Mammary epithelial cell (primary cell): ENCODE measurements at regions of chr3 and their contacts with region 1.

Region 1: DNA sequence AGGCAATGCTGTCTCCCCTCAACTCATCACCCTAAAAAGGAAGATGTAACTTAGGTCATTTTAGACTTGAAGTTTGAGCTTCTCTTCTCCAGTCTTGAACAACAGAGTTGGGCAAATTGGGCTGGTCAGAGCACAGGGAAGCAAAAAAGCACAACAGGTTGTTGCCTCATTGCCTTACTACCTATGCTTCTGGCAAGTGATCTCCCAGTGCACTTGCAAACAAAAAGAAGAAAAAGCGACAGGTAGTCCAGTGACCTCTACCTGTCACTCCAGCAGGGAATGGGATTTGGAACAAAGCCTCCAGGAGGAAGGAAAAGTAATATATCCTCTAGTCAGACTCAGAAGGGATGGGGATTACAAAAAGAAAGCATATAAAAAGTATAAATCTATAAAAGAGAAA is 160.2 kb upstream of the MANF start:
- DNase-seq: no peak
- H3K4me3 ChIP-seq: no peak overlapping the region
- H3K27ac ChIP-seq: no peak overlapping the region
- H3K4me1 ChIP-seq: no peaks in the 10 kb centered on the region
- H3K27me3 ChIP-seq: no peaks in the 10 kb centered on the region
- CTCF ChIP-seq: no peak

Region 2: DNA sequence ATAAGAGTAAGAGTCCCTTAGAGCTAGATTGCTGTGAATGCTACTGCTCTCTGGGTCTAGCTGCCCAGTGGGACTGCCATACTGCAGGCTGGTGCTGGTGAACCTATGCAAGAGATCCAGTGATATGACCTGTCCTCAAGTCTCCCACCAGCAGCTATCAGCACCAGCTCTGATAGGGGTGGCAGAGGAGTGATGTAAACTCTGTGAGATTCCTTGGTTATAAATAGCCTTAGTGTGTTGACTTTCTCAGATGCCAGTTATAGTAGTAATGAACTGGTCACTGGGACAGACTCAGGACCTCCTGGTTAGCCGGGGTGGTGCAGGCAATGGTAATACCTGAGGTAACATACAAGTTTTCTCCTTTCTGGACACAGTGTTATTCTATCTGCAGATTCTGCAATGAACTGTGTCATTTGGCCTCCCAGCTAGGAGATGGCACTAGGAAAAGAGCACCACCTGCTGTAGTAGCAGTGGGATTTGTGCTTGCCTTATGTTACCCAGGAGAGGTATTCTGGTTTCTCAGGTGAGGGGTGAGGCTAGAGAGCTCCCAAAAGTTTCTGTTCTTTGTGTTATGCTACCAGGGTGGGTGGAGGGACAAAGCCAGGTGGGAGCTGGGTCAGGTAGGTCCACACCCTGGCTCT is 34.5 kb before region 1 on chr3:
- CTCF ChIA-PET with region 1: no interaction called
- dilution Hi-C with region 1: loop called (anchors 5 kb)
- in situ Hi-C with region 1: no loop called
- intact Hi-C with region 1: no loop called
- DNase-seq: no peak
- H3K4me3 ChIP-seq: no peak overlapping the region
- H3K27ac ChIP-seq: no peak overlapping the region
- H3K4me1 ChIP-seq: no peaks in the 10 kb centered on the region
- H3K27me3 ChIP-seq: no peaks in the 10 kb centered on the region
- CTCF ChIP-seq: no peak